IMR-90 (cell line): ENCODE measurements at regions of chr3 and their contacts with region 1.

Region 1: GRCh38 chr3:111071257-111072015 is at the start of gene NECTIN3:
- DNase-seq: peak; percentile 99
- ATAC-seq: peak; percentile 90
- H3K4me3 ChIP-seq: peak within 1 kb of the TSS; percentile 98
- H3K27ac ChIP-seq: peak within 1 kb of the TSS; percentile 99
- H3K4me1 ChIP-seq: no peaks in the 10 kb centered on the region; the same call in 1 of the 2 replicates
- H3K27me3 ChIP-seq: no peaks in the 10 kb centered on the region
- CTCF ChIP-seq: no peak
- POLR2A ChIP-seq: peak; percentile 72
- RAD21 ChIP-seq: 0 out of 2 replicates have a peak, but pooled peaks have one; percentile 6
- total RNA-seq, gene NECTIN3: 155 and 182 TPM in 2 replicates

Region 2: GRCh38 chr3:109532257-109533216 is 1538.9 kb before region 1 on chr3:
- CTCF ChIA-PET with region 1: interaction called, 3 read pairs
- POLR2A ChIA-PET with region 1: no interaction called
- dilution Hi-C with region 1: no loop called
- in situ Hi-C with region 1: loop called (anchors 10 kb)
- intact Hi-C with region 1: loop called (anchors 5 kb)
- DNase-seq: peak; percentile 83
- ATAC-seq: peak; percentile 96
- H3K4me3 ChIP-seq: no peak overlapping the region
- H3K27ac ChIP-seq: no peak overlapping the region
- H3K4me1 ChIP-seq: no peaks in the 10 kb centered on the region
- H3K27me3 ChIP-seq: no peaks in the 10 kb centered on the region
- CTCF ChIP-seq: peak; percentile 72
- POLR2A ChIP-seq: no peak
- RAD21 ChIP-seq: peak; percentile 80

Region 3: GRCh38 chr3:110021659-110022058 is 1049.8 kb before region 1 on chr3:
- CTCF ChIA-PET with region 1: no interaction called
- POLR2A ChIA-PET with region 1: no interaction called
- dilution Hi-C with region 1: no loop called
- in situ Hi-C with region 1: no loop called
- intact Hi-C with region 1: no loop called
- DNase-seq: no peak
- ATAC-seq: no peak
- H3K4me3 ChIP-seq: no peak overlapping the region
- H3K27ac ChIP-seq: no peak overlapping the region
- H3K4me1 ChIP-seq: no peaks in the 10 kb centered on the region
- H3K27me3 ChIP-seq: no peaks in the 10 kb centered on the region
- CTCF ChIP-seq: no peak
- POLR2A ChIP-seq: no peak
- RAD21 ChIP-seq: no peak

Region 4: DNA sequence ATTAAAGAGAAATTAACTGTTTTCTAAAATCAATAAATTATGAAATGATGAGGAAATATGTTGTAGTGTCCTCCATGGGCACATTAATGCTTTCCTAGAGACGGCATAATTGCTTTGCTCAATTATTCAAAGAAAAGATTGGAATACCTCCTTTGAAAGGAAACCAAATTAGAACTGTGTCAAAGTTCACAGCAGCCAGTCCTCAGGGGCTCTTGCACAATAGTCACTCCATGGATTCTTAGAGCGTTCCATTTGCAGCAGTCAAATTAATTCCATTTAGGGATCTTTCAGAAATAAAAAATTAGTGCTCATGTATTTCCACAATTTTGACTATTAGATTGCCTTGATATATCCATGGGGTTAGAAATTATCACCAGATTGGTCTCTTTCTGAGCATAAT is 892.5 kb before region 1 on chr3:
- CTCF ChIA-PET with region 1: no interaction called
- POLR2A ChIA-PET with region 1: no interaction called
- dilution Hi-C with region 1: no loop called
- in situ Hi-C with region 1: no loop called
- intact Hi-C with region 1: loop called (anchors 5 kb)
- DNase-seq: peak; percentile 6
- ATAC-seq: no peak
- H3K4me3 ChIP-seq: no peak overlapping the region
- H3K27ac ChIP-seq: no peak overlapping the region
- H3K4me1 ChIP-seq: peaks cover 4% of the 10 kb centered on the region; the same call in 1 of the 2 replicates
- H3K27me3 ChIP-seq: no peaks in the 10 kb centered on the region
- CTCF ChIP-seq: no peak
- POLR2A ChIP-seq: no peak
- RAD21 ChIP-seq: no peak

Region 5: GRCh38 chr3:110413807-110414748 is 657.4 kb before region 1 on chr3:
- CTCF ChIA-PET with region 1: no interaction called
- POLR2A ChIA-PET with region 1: interaction called, 5 read pairs
- dilution Hi-C with region 1: no loop called
- in situ Hi-C with region 1: no loop called
- intact Hi-C with region 1: loop called (anchors 5 kb)
- DNase-seq: peak; percentile 84
- ATAC-seq: peak; percentile 84
- H3K4me3 ChIP-seq: no peak overlapping the region
- H3K27ac ChIP-seq: peak overlapping the region; percentile 100
- H3K4me1 ChIP-seq: peaks cover 12% of the 10 kb centered on the region
- H3K27me3 ChIP-seq: no peaks in the 10 kb centered on the region
- CTCF ChIP-seq: no peak
- POLR2A ChIP-seq: no peak
- RAD21 ChIP-seq: no peak

Region 6: DNA sequence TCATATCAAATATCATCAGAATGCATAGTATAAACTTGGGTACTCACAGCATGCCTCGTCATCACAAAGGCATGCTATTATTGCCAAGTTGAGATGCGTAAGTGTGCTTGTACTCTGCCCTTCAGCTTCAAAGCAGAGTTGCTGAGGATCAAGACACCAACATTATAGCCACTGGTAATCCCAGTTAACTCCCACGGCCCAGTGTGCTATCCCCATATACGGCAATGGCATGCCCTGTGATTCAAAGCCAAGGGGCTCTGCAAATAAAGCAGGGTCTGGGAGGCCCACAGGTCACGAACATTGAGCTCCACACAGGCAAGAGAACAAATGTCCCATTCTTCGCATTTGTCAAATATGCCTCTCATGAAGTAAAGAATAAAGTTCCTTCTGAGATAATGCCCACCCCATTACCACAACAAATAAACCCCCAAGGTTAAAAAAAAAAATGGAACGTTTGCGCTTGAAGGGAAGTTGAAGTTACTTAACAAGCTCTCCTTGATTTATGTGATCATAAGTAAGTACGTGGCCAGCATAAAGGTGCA is 298.0 kb before region 1 on chr3:
- CTCF ChIA-PET with region 1: no interaction called
- POLR2A ChIA-PET with region 1: no interaction called
- dilution Hi-C with region 1: no loop called
- in situ Hi-C with region 1: no loop called
- intact Hi-C with region 1: loop called (anchors 1 kb)
- DNase-seq: peak; percentile 98
- ATAC-seq: peak; percentile 92
- H3K4me3 ChIP-seq: no peak overlapping the region
- H3K27ac ChIP-seq: peak overlapping the region; percentile 80
- H3K4me1 ChIP-seq: peaks cover 7% of the 10 kb centered on the region; the same call in 1 of the 2 replicates
- H3K27me3 ChIP-seq: no peaks in the 10 kb centered on the region
- CTCF ChIP-seq: no peak
- POLR2A ChIP-seq: no peak
- RAD21 ChIP-seq: no peak; the same call in 1 of the 2 replicates

Region 7: GRCh38 chr3:111045564-111045963 is 25.9 kb before region 1 on chr3:
- CTCF ChIA-PET with region 1: no interaction called
- POLR2A ChIA-PET with region 1: no interaction called
- dilution Hi-C with region 1: no loop called
- in situ Hi-C with region 1: no loop called
- intact Hi-C with region 1: no loop called
- DNase-seq: peak; percentile 21
- ATAC-seq: no peak
- H3K4me3 ChIP-seq: no peak overlapping the region
- H3K27ac ChIP-seq: no peak overlapping the region
- H3K4me1 ChIP-seq: no peaks in the 10 kb centered on the region
- H3K27me3 ChIP-seq: no peaks in the 10 kb centered on the region
- CTCF ChIP-seq: no peak
- POLR2A ChIP-seq: no peak
- RAD21 ChIP-seq: no peak

Region 8: DNA sequence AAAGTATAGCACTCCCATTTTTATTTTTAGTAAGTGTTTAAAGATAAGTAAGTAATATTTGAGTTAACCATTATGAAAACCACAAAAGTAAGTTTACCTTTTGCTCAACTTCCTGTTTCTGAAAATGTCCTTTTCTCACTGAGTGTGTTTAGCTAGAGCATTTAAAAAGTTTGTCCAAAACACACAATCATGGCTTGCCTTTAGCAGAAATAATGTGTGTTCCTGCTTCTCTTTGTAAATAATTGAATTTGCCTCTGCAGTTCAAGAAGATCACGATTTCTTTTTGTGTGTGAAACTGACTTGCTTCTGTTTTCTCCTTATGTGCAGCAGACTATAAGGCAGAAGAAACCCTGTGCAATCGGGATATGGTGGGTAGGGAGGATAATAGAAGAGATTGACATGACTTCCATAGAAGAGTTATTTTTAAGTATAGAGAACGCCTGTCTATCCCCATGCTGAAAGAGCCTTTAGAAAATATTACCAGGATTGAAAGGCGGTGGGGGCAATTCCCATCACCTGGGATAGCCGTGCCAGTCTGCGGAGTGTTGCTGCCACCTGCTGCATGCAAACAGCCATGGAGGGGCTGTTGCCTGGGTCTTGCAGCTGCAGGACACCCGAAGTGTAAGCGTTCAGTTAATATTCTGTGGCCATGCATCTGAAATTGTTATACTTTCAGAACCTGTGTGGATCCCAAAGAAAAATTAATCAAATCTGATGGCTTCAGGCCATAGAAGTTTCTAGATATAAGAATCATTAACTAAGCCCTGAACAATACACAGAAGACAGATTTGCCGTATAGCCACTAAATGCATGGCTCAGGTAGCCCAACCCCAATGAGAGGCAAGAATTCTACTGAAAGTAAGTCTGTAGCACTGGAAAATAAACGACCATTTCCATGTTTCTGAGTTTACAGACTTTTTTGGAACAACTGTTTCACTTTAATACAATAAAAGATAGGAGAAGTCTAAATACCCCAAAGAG is 468.2 kb after region 1 on chr3:
- CTCF ChIA-PET with region 1: no interaction called
- POLR2A ChIA-PET with region 1: no interaction called
- dilution Hi-C with region 1: no loop called
- in situ Hi-C with region 1: no loop called
- intact Hi-C with region 1: loop called (anchors 5 kb)
- DNase-seq: peak; percentile 41
- ATAC-seq: peak; percentile 66
- H3K4me3 ChIP-seq: no peak overlapping the region
- H3K27ac ChIP-seq: no peak overlapping the region
- H3K4me1 ChIP-seq: peaks cover 7% of the 10 kb centered on the region
- H3K27me3 ChIP-seq: no peaks in the 10 kb centered on the region
- CTCF ChIP-seq: peak; percentile 57
- POLR2A ChIP-seq: no peak
- RAD21 ChIP-seq: peak; percentile 81